Adrenal gland (tissue), 19 donors: ENCODE measurements at regions of chr2 and their contacts with region 1.

Region 1: DNA sequence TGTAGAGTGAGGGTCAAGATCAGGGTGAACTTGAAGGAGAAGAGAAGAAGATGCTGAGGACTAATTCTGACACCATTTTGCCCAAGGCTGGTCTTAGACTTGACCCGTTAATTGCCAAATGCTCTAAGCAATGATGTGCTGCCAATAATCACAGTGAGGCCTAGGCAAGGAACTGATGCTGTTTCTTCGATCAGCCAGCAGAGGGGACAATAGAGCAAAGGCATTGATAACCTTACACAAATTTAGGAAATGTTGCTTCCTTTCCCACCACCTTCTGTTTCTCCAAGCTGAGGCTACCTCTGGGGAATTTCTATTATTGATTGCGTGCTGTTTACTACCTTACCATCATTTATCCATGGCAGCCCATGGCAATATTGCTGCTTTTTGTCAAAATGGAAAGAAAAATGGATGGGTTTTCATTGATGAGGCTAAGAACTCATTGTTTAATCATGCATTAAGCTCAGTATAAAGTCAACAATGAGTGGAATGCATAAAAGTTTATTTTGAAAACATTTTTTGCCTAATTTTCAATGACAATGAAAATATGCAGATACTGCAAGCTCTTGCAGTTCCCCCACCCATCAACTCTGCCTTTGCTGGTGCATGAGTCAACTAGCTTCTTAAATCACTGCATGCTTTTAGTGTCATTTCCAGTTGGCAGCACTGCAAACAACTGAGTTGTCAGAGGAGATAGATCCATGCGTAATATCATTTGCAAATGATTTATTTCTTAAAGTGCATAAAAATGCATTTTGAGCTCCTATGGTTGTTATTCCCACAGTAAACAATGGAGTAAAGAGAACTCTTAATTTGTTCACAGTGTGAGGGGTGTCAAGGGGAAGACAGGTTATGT is 116.4 kb upstream of the NYAP2 start:
- DNase-seq: peak in 5 of 7 donors; percentile 15 to 54 (median 20)
- H3K4me3 ChIP-seq: no peak overlapping the region
- H3K27ac ChIP-seq: no peak overlapping the region
- H3K4me1 ChIP-seq: no peaks in the 10 kb centered on the region
- H3K27me3 ChIP-seq: no peaks in the 10 kb centered on the region
- CTCF ChIP-seq: peak; percentile 46 to 71 (median 66)
- POLR2A ChIP-seq: no peak

Region 2: GRCh38 chr2:224401641-224402342 is 881.3 kb before region 1 on chr2 and contains the start of gene FAM124B:
- intact Hi-C with region 1: no loop called
- DNase-seq: peak; percentile 21 to 63 (median 34)
- H3K4me3 ChIP-seq: peak within 1 kb of the TSS in 1 of 4 donors; percentile 3
- H3K27ac ChIP-seq: peak within 1 kb of the TSS in 3 of 5 donors; percentile 16 to 35 (median 19)
- H3K4me1 ChIP-seq: peaks cover 0 to 3% of the 10 kb centered on the region in 2 donors
- H3K27me3 ChIP-seq: no peaks in the 10 kb centered on the region
- CTCF ChIP-seq: no peak
- POLR2A ChIP-seq: no peak
- total RNA-seq, gene FAM124B: 0.46 to 1.1 (median 0.67) TPM in 7 of 9 donors, not detected in the others

Region 3: DNA sequence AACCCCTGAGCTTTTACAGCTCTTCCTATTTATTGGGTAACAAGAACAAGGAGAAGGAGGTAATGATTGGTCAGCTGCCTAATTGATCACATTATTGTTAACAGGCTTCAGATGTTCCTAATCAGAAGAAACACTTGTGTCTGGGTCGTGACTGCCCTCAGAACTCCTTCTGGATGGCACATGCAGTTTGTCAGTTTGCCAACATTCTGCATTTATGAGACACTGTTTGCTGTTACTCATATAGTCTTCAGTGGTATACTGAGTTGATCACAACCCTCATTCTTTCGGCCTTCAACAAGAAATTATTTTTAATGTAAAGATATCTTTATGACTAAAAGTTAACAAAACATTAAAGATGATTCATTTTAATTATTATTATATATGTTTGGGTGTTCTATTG is 145.1 kb before region 1 on chr2:
- intact Hi-C with region 1: no loop called
- DNase-seq: no peak
- H3K4me3 ChIP-seq: no peak overlapping the region
- H3K27ac ChIP-seq: no peak overlapping the region
- H3K4me1 ChIP-seq: no peaks in the 10 kb centered on the region
- H3K27me3 ChIP-seq: no peaks in the 10 kb centered on the region
- CTCF ChIP-seq: no peak
- POLR2A ChIP-seq: no peak

Region 4: DNA sequence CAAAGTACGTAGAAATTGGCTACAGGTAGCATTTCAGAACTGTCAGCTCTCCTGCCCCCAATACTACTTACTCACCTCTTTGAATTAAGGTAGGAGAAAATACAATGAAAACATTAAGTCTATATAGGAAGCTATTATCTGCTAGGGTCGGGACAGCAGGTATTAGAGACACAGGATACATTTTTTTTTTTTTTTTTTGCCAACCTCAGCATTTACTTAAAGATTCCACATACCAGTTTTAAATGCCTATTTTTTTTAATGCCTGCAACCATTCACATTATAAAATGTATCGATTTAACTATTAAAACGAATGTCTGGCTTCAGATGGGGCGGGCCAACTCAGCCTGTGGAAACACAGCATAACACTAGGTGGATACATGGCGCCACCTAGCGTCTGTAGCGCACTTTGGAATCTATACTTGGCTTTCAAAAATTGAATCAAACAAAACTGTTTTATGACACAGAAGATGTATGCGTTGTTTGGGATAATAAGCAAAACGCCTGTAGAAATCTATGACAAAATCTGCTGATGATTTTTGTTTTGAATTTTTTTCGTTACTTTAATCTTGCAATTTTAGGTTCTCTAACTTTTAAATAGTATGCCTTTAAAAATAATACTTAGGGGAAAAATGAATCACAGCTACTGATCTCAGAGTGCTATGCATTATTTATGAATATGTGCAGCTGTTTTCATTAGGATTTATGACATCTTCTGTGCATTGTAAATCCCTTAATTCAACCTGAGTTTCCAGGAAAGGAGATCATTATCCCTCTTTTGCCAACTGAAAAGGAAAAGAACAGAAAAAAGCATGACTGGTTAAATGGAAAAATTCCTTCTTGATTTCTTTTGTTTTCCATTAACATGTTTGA is 377.4 kb after region 1 on chr2:
- intact Hi-C with region 1: loop called in 1 of 2 experiments (anchors 5 kb)
- DNase-seq: peak; percentile 53 to 92 (median 80)
- H3K4me3 ChIP-seq: no peak overlapping the region
- H3K27ac ChIP-seq: no peak overlapping the region
- H3K4me1 ChIP-seq: no peaks in the 10 kb centered on the region
- H3K27me3 ChIP-seq: no peaks in the 10 kb centered on the region
- CTCF ChIP-seq: peak; percentile 67 to 91 (median 80)
- POLR2A ChIP-seq: no peak